CD4-positive, alpha-beta memory T cell (primary cell): ENCODE measurements at regions of chr17 and their contacts with region 1.

Region 1: DNA sequence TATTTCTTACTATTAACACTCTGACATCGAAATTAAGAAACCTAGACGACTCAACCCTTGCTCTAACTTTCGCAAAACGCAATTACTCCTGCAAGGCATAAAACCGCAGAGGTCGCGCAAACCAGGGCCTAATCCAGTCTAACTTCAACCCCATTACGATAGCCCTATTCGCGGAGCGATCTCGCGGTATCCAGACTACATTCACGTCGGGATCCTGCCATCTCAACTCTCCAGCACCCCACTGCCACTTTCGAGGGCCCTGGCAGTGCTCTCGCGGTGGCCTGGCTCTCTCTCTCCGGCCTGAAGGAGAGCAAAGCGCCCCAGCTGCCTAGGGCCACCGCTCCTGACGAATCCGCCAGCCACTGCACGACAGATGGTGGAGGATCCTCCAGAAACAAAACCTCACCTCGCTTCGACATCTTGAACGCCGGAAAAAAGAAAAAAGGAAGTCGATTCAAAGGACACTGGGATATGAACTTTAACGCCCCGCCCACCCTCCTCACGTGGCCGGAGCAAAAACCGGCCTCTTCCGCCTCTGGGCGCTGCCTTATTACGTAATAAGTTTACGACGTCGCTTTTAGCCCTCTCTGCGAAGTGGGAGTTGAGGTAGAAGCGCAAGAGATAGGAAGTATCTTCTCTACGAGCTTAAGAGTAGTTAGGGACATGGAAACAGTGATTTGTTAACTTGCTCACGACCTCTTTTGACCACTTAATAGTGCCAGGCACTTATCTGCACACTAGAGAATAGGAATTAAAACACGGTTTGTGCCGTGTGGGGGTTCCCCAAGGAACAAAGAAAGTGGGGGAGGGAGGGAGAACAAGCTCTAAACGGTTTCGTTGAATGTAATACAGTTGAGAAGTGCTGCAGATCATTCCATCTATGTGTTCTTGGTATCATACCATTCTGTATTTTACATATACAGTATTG is at the start of gene RPL23:
- DNase-seq: peak; percentile 90 to 94 (median 92)
- H3K4me3 ChIP-seq: peak within 1 kb of the TSS; percentile 75 to 81
- H3K4me3 Mint-ChIP-seq: peak within 1 kb of the TSS; percentile 88 to 97 (median 95)
- H3K27ac ChIP-seq: peak within 1 kb of the TSS; percentile 87
- H3K27ac Mint-ChIP-seq: peak within 1 kb of the TSS; percentile 97 to 100 (median 99)
- H3K4me1 ChIP-seq: peaks cover 34% of the 10 kb centered on the region
- H3K4me1 Mint-ChIP-seq: peaks cover 30 to 45% (median 37%) of the 10 kb centered on the region in 4 donors
- H3K27me3 ChIP-seq: no peaks in the 10 kb centered on the region
- H3K27me3 Mint-ChIP-seq: no peaks in the 10 kb centered on the region
- total RNA-seq, gene RPL23: 1,511 to 1,572 TPM

Region 2: GRCh38 chr17:38322091-38322779 is 531.3 kb before region 1 on chr17:
- CTCF ChIA-PET with region 1: no interaction called
- POLR2A ChIA-PET with region 1: no interaction called
- intact Hi-C with region 1: no loop called
- DNase-seq: peak; percentile 50 to 71 (median 58)
- H3K4me3 ChIP-seq: no peak overlapping the region
- H3K4me3 Mint-ChIP-seq: no peak overlapping the region
- H3K27ac ChIP-seq: no peak overlapping the region
- H3K27ac Mint-ChIP-seq: no peak overlapping the region
- H3K4me1 ChIP-seq: no peaks in the 10 kb centered on the region
- H3K4me1 Mint-ChIP-seq: peaks cover 0 to 8% (median under 1%) of the 10 kb centered on the region in 4 donors
- H3K27me3 ChIP-seq: no peaks in the 10 kb centered on the region
- H3K27me3 Mint-ChIP-seq: no peaks in the 10 kb centered on the region

Region 3: GRCh38 chr17:38799378-38800236 is 53.9 kb before region 1 on chr17 and contains the start of gene PIP4K2B:
- CTCF ChIA-PET with region 1: no interaction called
- POLR2A ChIA-PET with region 1: interaction called, 11 read pairs
- intact Hi-C with region 1: loop called (anchors 2 kb)
- DNase-seq: peak; percentile 81 to 88 (median 83)
- H3K4me3 ChIP-seq: peak within 1 kb of the TSS; percentile 76 to 84
- H3K4me3 Mint-ChIP-seq: peak within 1 kb of the TSS; percentile 91 to 98 (median 94)
- H3K27ac ChIP-seq: peak within 1 kb of the TSS; percentile 76
- H3K27ac Mint-ChIP-seq: peak within 1 kb of the TSS; percentile 89 to 96 (median 93)
- H3K4me1 ChIP-seq: peaks cover 27% of the 10 kb centered on the region
- H3K4me1 Mint-ChIP-seq: peaks cover 30 to 46% (median 36%) of the 10 kb centered on the region in 4 donors
- H3K27me3 ChIP-seq: no peaks in the 10 kb centered on the region
- H3K27me3 Mint-ChIP-seq: no peaks in the 10 kb centered on the region
- total RNA-seq, gene PIP4K2B: 55.9 to 66.3 TPM

Region 4: DNA sequence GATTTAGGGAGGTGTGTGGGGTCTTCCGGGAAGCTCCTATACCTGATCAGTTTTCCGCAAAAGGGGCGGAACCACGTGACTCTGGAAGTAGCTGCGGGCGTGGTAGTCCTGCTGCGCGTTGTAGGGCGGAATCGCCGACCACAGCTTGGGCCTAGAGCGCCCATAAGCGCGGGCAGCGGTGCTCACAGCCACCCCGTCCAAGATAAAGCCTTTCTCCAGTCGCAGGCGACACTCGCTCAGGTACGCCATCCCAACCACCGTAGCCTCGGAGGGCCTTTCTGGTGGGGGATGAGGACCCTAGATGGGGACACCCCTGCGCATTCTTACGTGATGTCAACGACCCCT is 12.4 kb before region 1 on chr17:
- CTCF ChIA-PET with region 1: interaction called, 4 read pairs
- POLR2A ChIA-PET with region 1: interaction called, 25 read pairs
- intact Hi-C with region 1: no loop called
- DNase-seq: no peak
- H3K4me3 ChIP-seq: peak overlapping the region in 1 of 2 donors; percentile 19
- H3K4me3 Mint-ChIP-seq: peak overlapping the region in 7 of 8 donors; percentile 17 to 73 (median 57)
- H3K27ac ChIP-seq: no peak overlapping the region
- H3K27ac Mint-ChIP-seq: peak overlapping the region in 1 of 7 donors; percentile 46
- H3K4me1 ChIP-seq: no peaks in the 10 kb centered on the region
- H3K4me1 Mint-ChIP-seq: no peaks in the 10 kb centered on the region
- H3K27me3 ChIP-seq: no peaks in the 10 kb centered on the region
- H3K27me3 Mint-ChIP-seq: no peaks in the 10 kb centered on the region

Region 5: GRCh38 chr17:38898812-38899348 is 45.3 kb after region 1 on chr17:
- CTCF ChIA-PET with region 1: no interaction called
- POLR2A ChIA-PET with region 1: interaction called, 42 read pairs
- intact Hi-C with region 1: loop called (anchors 2 kb)
- DNase-seq: peak; percentile 71 to 93 (median 79)
- H3K4me3 ChIP-seq: peak overlapping the region; percentile 36 to 57
- H3K4me3 Mint-ChIP-seq: peak overlapping the region; percentile 66 to 93 (median 88)
- H3K27ac ChIP-seq: peak overlapping the region; percentile 85
- H3K27ac Mint-ChIP-seq: peak overlapping the region; percentile 90 to 98 (median 97)
- H3K4me1 ChIP-seq: peaks cover 88% of the 10 kb centered on the region
- H3K4me1 Mint-ChIP-seq: peaks cover 40 to 79% (median 62%) of the 10 kb centered on the region in 4 donors
- H3K27me3 ChIP-seq: no peaks in the 10 kb centered on the region
- H3K27me3 Mint-ChIP-seq: no peaks in the 10 kb centered on the region

Region 6: DNA sequence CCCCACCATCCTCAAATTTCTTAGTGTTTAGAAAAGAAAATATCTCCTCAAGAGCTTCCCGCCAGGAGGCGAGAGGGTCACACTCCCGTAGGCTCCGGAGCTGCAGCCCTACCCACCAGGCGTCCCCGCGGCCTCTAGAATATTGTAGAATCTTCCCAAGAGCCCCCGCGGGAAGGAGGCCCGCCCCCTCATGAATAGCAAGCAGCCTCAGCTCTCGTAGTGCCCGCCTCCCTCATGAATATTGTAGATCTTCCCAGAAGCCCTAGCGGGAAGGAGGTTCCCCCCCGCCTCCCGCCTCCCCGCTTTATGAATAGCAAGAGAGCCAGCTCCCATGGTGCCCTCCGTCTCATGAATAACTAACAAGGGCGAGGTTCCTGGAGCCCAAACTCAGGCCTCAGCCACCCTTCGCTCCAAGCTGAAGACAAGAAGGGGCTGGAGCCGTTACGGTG is 113.8 kb after region 1 on chr17 and contains the start of gene FBXO47:
- CTCF ChIA-PET with region 1: interaction called, 3 read pairs
- POLR2A ChIA-PET with region 1: interaction called, 15 read pairs
- intact Hi-C with region 1: no loop called
- DNase-seq: peak; percentile 69 to 89 (median 77)
- H3K4me3 ChIP-seq: peak within 1 kb of the TSS in 1 of 2 donors; percentile 10
- H3K4me3 Mint-ChIP-seq: peak within 1 kb of the TSS; percentile 70 to 87 (median 81)
- H3K27ac ChIP-seq: no peak within 1 kb of the TSS
- H3K27ac Mint-ChIP-seq: peak within 1 kb of the TSS; percentile 74 to 90 (median 86)
- H3K4me1 ChIP-seq: peaks cover 7% of the 10 kb centered on the region
- H3K4me1 Mint-ChIP-seq: peaks cover 7 to 16% (median 12%) of the 10 kb centered on the region in 4 donors
- H3K27me3 ChIP-seq: no peaks in the 10 kb centered on the region
- H3K27me3 Mint-ChIP-seq: no peaks in the 10 kb centered on the region
- total RNA-seq, gene FBXO47: not detected